Activated B cell treated with CpG ODN at 0.5 μM for 24 hours (primary cell): ENCODE measurements at regions of chr5 and their contacts with region 1.

Region 1: GRCh38 chr5:149046196-149046829 is 16.5 kb downstream of the SH3TC2 start:
- DNase-seq: no peak
- ATAC-seq: no peak
- H3K4me3 Mint-ChIP-seq: no peak overlapping the region
- H3K27ac Mint-ChIP-seq: no peak overlapping the region
- H3K4me1 Mint-ChIP-seq: no peaks in the 10 kb centered on the region
- H3K27me3 Mint-ChIP-seq: peaks cover 8% of the 10 kb centered on the region
- CTCF ChIP-seq: no peak

Region 2: GRCh38 chr5:149035372-149035790 is 10.9 kb before region 1 on chr5:
- CTCF ChIA-PET with region 1: interaction called, 13 read pairs
- POLR2A ChIA-PET with region 1: no interaction called
- intact Hi-C with region 1: no loop called
- DNase-seq: peak; percentile 30
- ATAC-seq: peak; percentile 79
- H3K4me3 Mint-ChIP-seq: no peak overlapping the region
- H3K27ac Mint-ChIP-seq: no peak overlapping the region
- H3K4me1 Mint-ChIP-seq: no peaks in the 10 kb centered on the region
- H3K27me3 Mint-ChIP-seq: peaks cover 16% of the 10 kb centered on the region
- CTCF ChIP-seq: no peak

Region 3: DNA sequence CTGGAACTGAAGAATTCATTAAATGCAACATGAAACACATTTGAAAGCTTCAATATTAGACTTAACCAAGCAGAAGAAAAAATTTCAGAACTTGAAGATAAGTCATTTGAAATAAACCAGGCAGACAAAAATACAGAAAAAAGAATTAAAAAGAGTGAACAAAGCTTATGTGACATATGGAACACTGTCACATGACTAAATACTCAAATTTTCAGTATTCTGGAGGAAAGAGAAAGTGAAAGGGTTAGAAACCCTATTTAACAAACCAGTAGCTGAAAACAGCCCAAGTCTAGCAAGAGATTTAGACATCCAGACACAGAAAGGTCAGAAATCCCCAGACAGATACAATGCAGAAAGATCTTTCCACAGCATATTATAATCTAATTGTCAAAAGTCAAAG is 53.6 kb after region 1 on chr5:
- CTCF ChIA-PET with region 1: no interaction called
- POLR2A ChIA-PET with region 1: no interaction called
- intact Hi-C with region 1: no loop called
- DNase-seq: no peak
- ATAC-seq: no peak
- H3K4me3 Mint-ChIP-seq: no peak overlapping the region
- H3K27ac Mint-ChIP-seq: no peak overlapping the region
- H3K4me1 Mint-ChIP-seq: no peaks in the 10 kb centered on the region
- H3K27me3 Mint-ChIP-seq: no peaks in the 10 kb centered on the region
- CTCF ChIP-seq: no peak